B cell (primary cell): ENCODE measurements at regions of chr1 and their contacts with region 1.

Region 1: DNA sequence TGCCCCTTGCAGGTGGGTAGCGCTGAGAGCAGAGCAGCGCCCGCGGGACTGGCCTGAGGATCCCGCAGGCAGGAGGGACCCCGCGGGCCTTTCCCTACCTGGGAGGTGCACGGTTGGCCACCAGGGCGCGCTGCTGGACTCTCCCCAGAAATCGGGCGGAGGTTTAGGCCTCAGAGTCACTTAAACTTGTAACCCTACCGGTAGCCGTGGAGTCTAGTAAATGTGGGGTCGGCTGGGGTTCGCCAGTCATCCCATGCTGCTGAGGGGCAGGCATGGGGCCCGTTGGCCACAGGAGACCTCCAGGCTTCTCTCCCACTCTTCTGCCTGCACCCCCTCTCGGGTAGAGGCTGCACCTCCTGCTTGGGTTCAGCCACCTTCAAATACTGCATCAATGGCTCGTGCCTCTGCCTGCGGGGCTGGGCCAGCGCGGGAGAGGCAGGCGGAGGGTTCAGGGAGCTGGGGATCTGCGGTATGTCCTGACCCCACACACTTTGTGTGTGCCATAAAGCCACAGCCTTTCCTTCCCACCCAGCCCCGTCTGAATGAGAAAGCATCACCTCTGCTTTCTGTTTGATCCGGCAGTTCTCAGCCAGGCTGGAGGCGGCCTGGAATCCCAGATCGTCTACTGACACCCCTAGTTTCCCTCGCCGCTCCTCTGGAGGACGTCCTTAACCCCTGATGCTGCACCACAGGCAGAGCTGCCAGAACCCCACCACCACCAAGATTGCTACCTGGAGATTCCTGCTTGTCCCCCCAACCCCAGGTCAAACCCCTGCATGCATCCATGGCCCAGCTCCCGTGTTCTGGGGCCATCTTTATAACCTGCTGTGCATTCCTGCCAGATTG is 12.3 kb upstream of the GSTM4 start:
- DNase-seq: peak; percentile 86
- ATAC-seq: peak; percentile 88
- H3K4me3 ChIP-seq: peak overlapping the region in 1 of 5 experiments; percentile 6
- H3K4me3 Mint-ChIP-seq: peak overlapping the region; percentile 7
- H3K27ac ChIP-seq: no peak overlapping the region
- H3K27ac Mint-ChIP-seq: no peak overlapping the region
- H3K4me1 ChIP-seq: peaks cover 4 to 14% of the 10 kb centered on the region in 2 donors
- H3K4me1 Mint-ChIP-seq: peaks cover 13% of the 10 kb centered on the region
- H3K27me3 ChIP-seq: peaks cover 0 to 2% (median 0%) of the 10 kb centered on the region in 4 experiments
- H3K27me3 Mint-ChIP-seq: peaks cover 4% of the 10 kb centered on the region
- CTCF ChIP-seq: peak; percentile 92

Region 2: DNA sequence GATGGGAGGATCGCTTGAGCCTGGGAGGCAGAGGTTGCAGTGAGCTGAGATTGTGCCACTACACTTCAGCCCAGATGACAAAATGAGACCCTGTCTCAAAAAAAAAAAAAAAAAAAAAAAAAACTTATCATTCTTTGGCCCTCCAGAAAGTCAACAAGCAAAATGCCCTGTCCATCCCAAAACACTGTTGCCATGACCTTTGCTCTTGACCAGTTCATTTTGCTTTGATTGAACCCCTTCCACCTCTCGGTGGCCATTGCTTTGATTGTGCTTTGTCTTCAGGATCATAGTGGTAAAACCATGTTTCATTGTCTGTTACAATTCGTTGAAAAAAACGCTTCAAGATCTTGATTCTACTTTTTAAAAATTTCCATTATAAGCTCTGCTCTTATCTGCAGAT is 185.8 kb before region 1 on chr1:
- CTCF ChIA-PET with region 1: no interaction called
- POLR2A ChIA-PET with region 1: no interaction called
- intact Hi-C with region 1: no loop called
- DNase-seq: no peak
- ATAC-seq: no peak
- H3K4me3 ChIP-seq: no peak overlapping the region
- H3K4me3 Mint-ChIP-seq: no peak overlapping the region
- H3K27ac ChIP-seq: no peak overlapping the region
- H3K27ac Mint-ChIP-seq: no peak overlapping the region
- H3K4me1 ChIP-seq: no peaks in the 10 kb centered on the region
- H3K4me1 Mint-ChIP-seq: no peaks in the 10 kb centered on the region
- H3K27me3 ChIP-seq: peaks cover 0 to 7% (median 6%) of the 10 kb centered on the region in 4 experiments
- H3K27me3 Mint-ChIP-seq: peaks cover 49% of the 10 kb centered on the region
- CTCF ChIP-seq: no peak

Region 3: GRCh38 chr1:109532365-109533136 is 111.1 kb before region 1 on chr1:
- CTCF ChIA-PET with region 1: interaction called, 18 read pairs
- POLR2A ChIA-PET with region 1: no interaction called
- intact Hi-C with region 1: no loop called
- DNase-seq: peak; percentile 88
- ATAC-seq: peak; percentile 90
- H3K4me3 ChIP-seq: peak overlapping the region in 4 of 5 experiments; percentile 37 to 67 (median 52)
- H3K4me3 Mint-ChIP-seq: peak overlapping the region; percentile 90
- H3K27ac ChIP-seq: peak overlapping the region in 1 of 2 donors; percentile 21
- H3K27ac Mint-ChIP-seq: peak overlapping the region; percentile 87
- H3K4me1 ChIP-seq: peaks cover 4 to 11% of the 10 kb centered on the region in 2 donors
- H3K4me1 Mint-ChIP-seq: peaks cover 11% of the 10 kb centered on the region
- H3K27me3 ChIP-seq: no peaks in the 10 kb centered on the region
- H3K27me3 Mint-ChIP-seq: no peaks in the 10 kb centered on the region
- CTCF ChIP-seq: peak; percentile 93

Region 4: DNA sequence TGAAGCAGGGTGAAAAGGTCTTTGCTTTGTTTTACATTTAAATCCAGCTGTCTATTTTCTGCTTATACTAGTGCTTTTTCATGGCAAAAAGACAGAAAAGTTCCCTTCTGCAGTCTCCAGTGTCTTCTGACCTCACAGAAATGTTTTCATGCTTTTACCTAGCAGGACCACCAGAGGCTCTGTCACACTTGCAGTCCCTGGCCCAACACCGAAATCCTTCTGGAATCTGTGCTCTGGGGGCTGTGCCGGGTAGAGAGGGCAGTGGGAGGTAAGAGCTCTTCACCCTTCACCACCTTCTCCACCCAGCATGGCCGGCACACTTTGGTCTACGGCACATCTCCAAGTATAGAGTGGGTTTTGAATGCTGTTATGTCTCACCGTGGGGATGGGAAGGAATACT is 45.0 kb before region 1 on chr1:
- CTCF ChIA-PET with region 1: interaction called, 23 read pairs
- POLR2A ChIA-PET with region 1: no interaction called
- intact Hi-C with region 1: no loop called
- DNase-seq: peak; percentile 17
- ATAC-seq: no peak
- H3K4me3 ChIP-seq: no peak overlapping the region
- H3K4me3 Mint-ChIP-seq: no peak overlapping the region
- H3K27ac ChIP-seq: no peak overlapping the region
- H3K27ac Mint-ChIP-seq: no peak overlapping the region
- H3K4me1 ChIP-seq: no peaks in the 10 kb centered on the region
- H3K4me1 Mint-ChIP-seq: no peaks in the 10 kb centered on the region
- H3K27me3 ChIP-seq: no peaks in the 10 kb centered on the region
- H3K27me3 Mint-ChIP-seq: no peaks in the 10 kb centered on the region
- CTCF ChIP-seq: no peak

Region 5: DNA sequence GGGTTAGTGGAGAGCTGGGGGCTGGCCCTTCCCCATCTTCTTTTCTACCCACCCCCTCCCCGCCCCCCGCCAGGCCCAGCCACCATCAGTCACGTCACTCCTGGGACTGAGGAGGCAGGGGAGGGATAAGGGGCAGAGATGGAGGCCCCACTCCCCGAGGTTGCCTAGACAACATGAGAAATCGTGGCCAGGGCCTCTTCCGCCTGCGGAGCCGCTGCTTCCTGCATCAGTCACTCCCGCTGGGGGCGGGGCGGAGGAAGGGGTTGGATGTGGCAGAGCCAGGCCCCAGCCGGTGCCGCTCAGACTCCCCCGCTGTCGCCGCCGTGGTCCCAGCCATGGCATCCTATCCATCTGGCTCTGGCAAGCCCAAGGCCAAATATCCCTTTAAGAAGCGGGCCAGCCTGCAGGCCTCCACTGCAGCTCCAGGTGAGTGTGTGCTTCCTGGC is 22.7 kb before region 1 on chr1:
- CTCF ChIA-PET with region 1: interaction called, 64 read pairs
- POLR2A ChIA-PET with region 1: no interaction called
- intact Hi-C with region 1: no loop called
- DNase-seq: peak; percentile 86
- ATAC-seq: peak; percentile 59
- H3K4me3 ChIP-seq: peak overlapping the region; percentile 65 to 94 (median 84)
- H3K4me3 Mint-ChIP-seq: peak overlapping the region; percentile 99
- H3K27ac ChIP-seq: peak overlapping the region; percentile 64 to 90
- H3K27ac Mint-ChIP-seq: peak overlapping the region; percentile 96
- H3K4me1 ChIP-seq: peaks cover 50 to 65% of the 10 kb centered on the region in 2 donors
- H3K4me1 Mint-ChIP-seq: peaks cover 72% of the 10 kb centered on the region
- H3K27me3 ChIP-seq: no peaks in the 10 kb centered on the region
- H3K27me3 Mint-ChIP-seq: no peaks in the 10 kb centered on the region
- CTCF ChIP-seq: no peak

Region 6: GRCh38 chr1:109655601-109656519 is 12.3 kb after region 1 on chr1 and contains the start of gene GSTM4:
- CTCF ChIA-PET with region 1: interaction called, 90 read pairs
- POLR2A ChIA-PET with region 1: interaction called, 4 read pairs
- intact Hi-C with region 1: loop called (anchors 1 kb)
- DNase-seq: peak; percentile 90
- ATAC-seq: peak; percentile 96
- H3K4me3 ChIP-seq: peak within 1 kb of the TSS; percentile 45 to 97 (median 90)
- H3K4me3 Mint-ChIP-seq: peak within 1 kb of the TSS; percentile 96
- H3K27ac ChIP-seq: peak within 1 kb of the TSS; percentile 37 to 76
- H3K27ac Mint-ChIP-seq: peak within 1 kb of the TSS; percentile 93
- H3K4me1 ChIP-seq: peaks cover 11 to 17% of the 10 kb centered on the region in 2 donors
- H3K4me1 Mint-ChIP-seq: peaks cover 23% of the 10 kb centered on the region
- H3K27me3 ChIP-seq: peaks cover 0 to 6% (median 0%) of the 10 kb centered on the region in 4 experiments
- H3K27me3 Mint-ChIP-seq: peaks cover 20% of the 10 kb centered on the region
- CTCF ChIP-seq: no peak
- total RNA-seq, gene GSTM4: 28.6 and 39.4 TPM in 2 replicates

Region 7: GRCh38 chr1:109773146-109773899 is 129.7 kb after region 1 on chr1:
- CTCF ChIA-PET with region 1: interaction called, 230 read pairs
- POLR2A ChIA-PET with region 1: no interaction called
- intact Hi-C with region 1: no loop called
- DNase-seq: peak; percentile 79
- ATAC-seq: peak; percentile 81
- H3K4me3 ChIP-seq: no peak overlapping the region
- H3K4me3 Mint-ChIP-seq: no peak overlapping the region
- H3K27ac ChIP-seq: no peak overlapping the region
- H3K27ac Mint-ChIP-seq: no peak overlapping the region
- H3K4me1 ChIP-seq: peaks cover 0 to 11% of the 10 kb centered on the region in 2 donors
- H3K4me1 Mint-ChIP-seq: no peaks in the 10 kb centered on the region
- H3K27me3 ChIP-seq: peaks cover 0 to 8% (median 0%) of the 10 kb centered on the region in 4 experiments
- H3K27me3 Mint-ChIP-seq: peaks cover 7% of the 10 kb centered on the region
- CTCF ChIP-seq: peak; percentile 63